Vagina (tissue), 2 donors: ENCODE measurements at regions of chr1 and their contacts with region 1.

Region 1: GRCh38 chr1:109984456-109985275 is at the start of gene AHCYL1:
- DNase-seq: peak; percentile 99
- H3K4me3 ChIP-seq: peak within 1 kb of the TSS; percentile 91 to 94
- H3K27ac ChIP-seq: peak within 1 kb of the TSS; percentile 97
- H3K4me1 ChIP-seq: peaks cover 75% of the 10 kb centered on the region
- H3K27me3 ChIP-seq: no peaks in the 10 kb centered on the region
- CTCF ChIP-seq: peak; percentile 97 to 100 (median 99)
- POLR2A ChIP-seq: peak; percentile 88 to 98
- total RNA-seq, gene AHCYL1: 75.6 TPM

Region 2: GRCh38 chr1:109630081-109630897 is 354.4 kb before region 1 on chr1:
- intact Hi-C with region 1: loop called (anchors 10 kb)
- DNase-seq: peak; percentile 67 to 85
- H3K4me3 ChIP-seq: no peak overlapping the region
- H3K27ac ChIP-seq: peak overlapping the region; percentile 80
- H3K4me1 ChIP-seq: peaks cover 35% of the 10 kb centered on the region
- H3K27me3 ChIP-seq: no peaks in the 10 kb centered on the region
- CTCF ChIP-seq: peak in 1 of 3 experiments; percentile 26
- POLR2A ChIP-seq: no peak

Region 3: DNA sequence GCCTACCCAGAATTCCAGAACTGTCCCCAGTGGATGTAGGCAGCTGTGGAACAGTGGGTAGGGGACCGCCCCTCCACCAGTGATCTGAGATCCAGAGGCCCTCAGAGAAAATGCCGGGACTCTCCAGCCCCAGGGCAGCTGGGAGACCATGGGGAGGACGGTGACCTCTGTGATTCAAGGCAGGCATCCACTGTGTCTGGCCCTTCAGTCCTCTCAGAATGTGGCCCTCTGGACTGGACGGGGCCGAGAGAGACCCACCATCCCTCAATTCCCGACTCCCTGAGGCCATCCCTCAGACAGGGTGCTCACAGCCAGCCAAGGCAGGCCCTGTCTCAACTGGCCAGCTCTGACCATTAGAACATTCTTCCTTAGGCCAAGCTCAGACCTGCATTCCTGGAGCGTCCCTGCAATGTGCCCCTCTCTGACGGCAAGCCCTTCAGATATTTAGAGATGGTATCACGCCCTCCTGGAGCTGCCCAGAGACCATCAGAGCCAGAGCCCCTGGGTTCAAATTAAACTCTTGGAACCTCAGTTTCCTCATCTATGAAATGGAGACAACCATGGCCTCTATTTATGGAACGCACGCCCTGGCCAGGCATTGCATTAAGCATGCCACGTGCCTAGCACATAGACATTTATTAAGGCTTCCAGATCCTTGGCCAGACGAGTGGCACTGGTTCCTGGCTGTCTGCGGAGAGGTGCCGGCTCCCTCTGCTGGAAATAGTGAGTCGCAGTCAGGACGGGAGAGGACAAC is 211.3 kb before region 1 on chr1:
- intact Hi-C with region 1: loop called (anchors 2 kb)
- DNase-seq: no peak
- H3K4me3 ChIP-seq: no peak overlapping the region
- H3K27ac ChIP-seq: no peak overlapping the region
- H3K4me1 ChIP-seq: no peaks in the 10 kb centered on the region
- H3K27me3 ChIP-seq: no peaks in the 10 kb centered on the region
- CTCF ChIP-seq: peak; percentile 56 to 89 (median 78)
- POLR2A ChIP-seq: no peak

Region 4: GRCh38 chr1:109877320-109877771 is 107.3 kb before region 1 on chr1:
- intact Hi-C with region 1: loop called (anchors 5 kb)
- DNase-seq: no peak
- H3K4me3 ChIP-seq: no peak overlapping the region
- H3K27ac ChIP-seq: peak overlapping the region; percentile 83
- H3K4me1 ChIP-seq: peaks cover 66% of the 10 kb centered on the region
- H3K27me3 ChIP-seq: no peaks in the 10 kb centered on the region
- CTCF ChIP-seq: peak in 2 of 3 experiments; percentile 23 to 28
- POLR2A ChIP-seq: no peak